B cell (primary cell): ENCODE measurements at regions of chr11 and their contacts with region 1.

Region 1: DNA sequence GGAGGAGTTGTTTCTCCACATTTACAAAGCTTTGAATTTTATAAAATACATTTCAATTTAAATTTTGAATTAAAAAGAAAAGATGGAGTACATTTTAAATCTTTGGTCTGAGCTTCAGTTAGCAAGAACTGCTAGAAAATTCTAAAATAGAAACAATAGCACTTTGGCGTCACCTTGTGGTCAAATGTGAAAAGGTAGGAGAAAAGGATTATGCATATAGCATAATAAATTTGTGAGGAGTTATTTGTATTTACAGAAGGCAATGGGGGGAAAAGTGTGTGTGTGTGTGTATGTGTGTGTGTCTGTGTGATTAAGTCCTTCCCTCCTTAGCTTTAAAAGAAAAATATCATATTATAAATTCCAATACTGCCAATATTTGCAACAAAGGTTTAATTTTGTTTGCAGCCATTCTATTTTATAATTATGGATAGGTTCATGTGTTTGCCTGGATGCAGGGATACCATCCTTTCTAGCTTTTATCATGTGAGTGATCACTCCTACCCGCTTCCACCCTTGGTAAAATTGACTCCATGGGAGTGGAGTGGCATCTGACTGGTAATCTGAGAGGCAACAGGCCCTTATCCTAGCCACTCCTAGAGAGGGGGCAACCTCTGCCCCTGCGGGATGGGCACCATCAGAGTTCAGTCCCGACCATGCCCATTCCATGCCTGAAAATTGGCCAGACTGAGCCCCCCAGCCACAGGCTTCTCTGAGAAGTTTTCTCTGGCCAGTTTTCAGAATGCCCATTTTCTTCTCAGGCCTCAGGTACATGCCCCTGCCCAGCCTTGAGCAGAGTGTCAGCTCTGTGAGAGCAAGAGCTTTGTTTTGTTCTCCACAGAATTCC is 13.6 kb upstream of the LGR4 start:
- DNase-seq: peak; percentile 63
- ATAC-seq: peak; percentile 45
- H3K4me3 ChIP-seq: no peak overlapping the region
- H3K4me3 Mint-ChIP-seq: no peak overlapping the region
- H3K27ac ChIP-seq: no peak overlapping the region
- H3K27ac Mint-ChIP-seq: no peak overlapping the region
- H3K4me1 ChIP-seq: no peaks in the 10 kb centered on the region
- H3K4me1 Mint-ChIP-seq: no peaks in the 10 kb centered on the region
- H3K27me3 ChIP-seq: no peaks in the 10 kb centered on the region
- H3K27me3 Mint-ChIP-seq: no peaks in the 10 kb centered on the region
- CTCF ChIP-seq: peak; percentile 97

Region 2: DNA sequence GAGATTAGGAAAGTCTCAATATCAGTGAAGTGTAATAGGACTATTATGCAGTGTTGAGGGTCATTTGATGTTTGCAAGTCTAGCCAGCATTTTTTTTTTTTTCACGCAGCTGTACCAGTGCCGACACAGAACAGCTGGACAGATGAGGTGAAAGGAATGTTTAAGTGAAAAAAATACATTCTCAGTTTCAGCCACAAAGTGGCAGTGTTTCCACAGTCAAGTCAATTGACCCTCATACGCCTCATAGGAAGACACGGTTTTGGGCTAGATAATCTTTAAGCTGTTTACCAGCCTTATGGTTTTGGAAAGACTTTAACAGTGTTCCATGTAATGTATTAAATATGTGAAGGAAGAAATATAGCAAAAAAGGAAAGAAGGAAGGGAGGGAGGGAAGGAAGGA is 1504.2 kb before region 1 on chr11:
- CTCF ChIA-PET with region 1: no interaction called
- POLR2A ChIA-PET with region 1: no interaction called
- intact Hi-C with region 1: loop called (anchors 2 kb)
- DNase-seq: peak; percentile 73
- ATAC-seq: peak; percentile 75
- H3K4me3 ChIP-seq: peak overlapping the region in 2 of 5 experiments; percentile 1 to 16
- H3K4me3 Mint-ChIP-seq: peak overlapping the region; percentile 81
- H3K27ac ChIP-seq: peak overlapping the region; percentile 42 to 63
- H3K27ac Mint-ChIP-seq: peak overlapping the region; percentile 86
- H3K4me1 ChIP-seq: peaks cover 16 to 17% of the 10 kb centered on the region in 2 donors
- H3K4me1 Mint-ChIP-seq: peaks cover 23% of the 10 kb centered on the region
- H3K27me3 ChIP-seq: no peaks in the 10 kb centered on the region
- H3K27me3 Mint-ChIP-seq: peaks cover 3% of the 10 kb centered on the region
- CTCF ChIP-seq: peak; percentile 75

Region 3: DNA sequence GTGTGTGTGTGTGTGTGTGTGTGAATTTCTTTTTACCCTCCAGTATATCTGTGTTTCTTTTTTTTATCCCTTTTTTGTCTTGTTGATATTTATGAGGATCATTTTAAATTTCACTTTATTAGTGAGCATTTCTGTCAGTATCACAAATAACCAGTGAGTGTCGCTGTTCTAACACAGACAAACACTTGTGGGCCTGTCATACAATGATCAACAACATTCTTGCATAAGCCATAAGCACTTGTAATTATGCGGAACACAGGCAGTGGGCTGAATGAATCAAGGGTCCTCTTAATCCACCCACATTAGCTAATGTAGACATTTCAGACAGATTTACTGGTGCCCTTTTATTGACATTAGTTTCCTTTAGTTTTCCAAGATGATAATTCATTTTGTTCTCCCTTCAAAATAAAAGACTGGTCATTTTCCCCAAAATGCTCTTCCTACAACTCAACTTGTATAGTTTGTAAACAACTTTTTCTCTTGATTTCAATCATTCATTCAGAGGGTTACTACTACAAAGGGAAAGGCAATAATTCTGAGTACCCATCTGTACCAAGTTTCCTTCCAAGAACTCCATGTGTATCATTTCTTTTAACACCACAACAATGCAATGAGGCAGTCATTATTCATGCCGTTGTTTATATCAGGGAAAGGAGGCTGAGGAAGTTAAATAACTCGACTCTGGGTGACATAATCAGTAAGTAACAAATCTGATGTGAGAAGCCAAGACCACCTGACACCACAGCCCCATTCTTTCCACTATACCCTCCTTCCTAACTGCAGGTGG is 1188.8 kb before region 1 on chr11:
- CTCF ChIA-PET with region 1: interaction called, 6 read pairs
- POLR2A ChIA-PET with region 1: no interaction called
- intact Hi-C with region 1: loop called (anchors 5 kb)
- DNase-seq: peak; percentile 20
- ATAC-seq: no peak
- H3K4me3 ChIP-seq: no peak overlapping the region
- H3K4me3 Mint-ChIP-seq: no peak overlapping the region
- H3K27ac ChIP-seq: no peak overlapping the region
- H3K27ac Mint-ChIP-seq: no peak overlapping the region
- H3K4me1 ChIP-seq: no peaks in the 10 kb centered on the region
- H3K4me1 Mint-ChIP-seq: no peaks in the 10 kb centered on the region
- H3K27me3 ChIP-seq: peaks cover 0 to 3% (median 0%) of the 10 kb centered on the region in 4 experiments
- H3K27me3 Mint-ChIP-seq: peaks cover 5% of the 10 kb centered on the region
- CTCF ChIP-seq: peak; percentile 60

Region 4: DNA sequence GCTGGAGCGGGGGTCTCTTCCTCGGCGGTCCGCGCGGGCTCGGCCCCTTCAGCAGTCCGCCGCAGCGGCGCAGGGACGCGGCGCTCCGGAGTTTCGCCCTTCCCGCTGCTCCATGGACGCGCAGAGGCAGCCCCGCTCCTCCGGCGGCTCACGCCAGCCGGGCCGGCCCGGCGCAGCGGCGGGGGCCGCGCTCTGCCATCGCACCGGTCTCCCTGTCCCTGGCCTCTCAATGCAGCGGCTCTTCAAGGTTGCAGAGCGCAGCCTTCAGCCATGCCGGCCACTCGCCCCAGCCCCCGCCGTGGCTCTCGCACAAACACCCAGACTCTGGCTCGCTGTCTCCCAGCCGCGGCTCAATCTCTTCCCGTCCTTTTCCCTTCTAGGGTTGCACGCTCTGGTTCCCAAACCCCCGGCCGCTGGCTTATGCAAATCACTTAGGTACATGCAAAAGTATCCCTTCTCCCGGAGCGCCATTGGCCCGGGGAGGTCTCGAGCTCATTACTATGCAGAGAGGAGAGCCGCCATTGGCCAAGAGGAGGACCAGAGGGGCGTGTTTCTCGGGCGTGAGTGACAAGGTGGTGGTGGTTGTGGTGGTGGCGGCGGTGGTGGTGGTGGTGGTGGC is 13.6 kb before region 1 on chr11 and contains the start of gene LGR4:
- CTCF ChIA-PET with region 1: interaction called, 27 read pairs
- POLR2A ChIA-PET with region 1: no interaction called
- intact Hi-C with region 1: no loop called
- DNase-seq: peak; percentile 80
- ATAC-seq: peak; percentile 88
- H3K4me3 ChIP-seq: peak within 1 kb of the TSS; percentile 52 to 72 (median 66)
- H3K4me3 Mint-ChIP-seq: peak within 1 kb of the TSS; percentile 92
- H3K27ac ChIP-seq: no peak within 1 kb of the TSS
- H3K27ac Mint-ChIP-seq: peak within 1 kb of the TSS; percentile 63
- H3K4me1 ChIP-seq: peaks cover 11% of the 10 kb centered on the region in 2 donors
- H3K4me1 Mint-ChIP-seq: peaks cover 22% of the 10 kb centered on the region
- H3K27me3 ChIP-seq: peaks cover 0 to 8% (median 0%) of the 10 kb centered on the region in 4 experiments
- H3K27me3 Mint-ChIP-seq: peaks cover 4% of the 10 kb centered on the region
- CTCF ChIP-seq: no peak
- total RNA-seq, gene LGR4: 3.3 TPM in 2 replicates

Region 5: GRCh38 chr11:27506200-27507182 is 20.3 kb after region 1 on chr11 and contains the start of gene LIN7C:
- CTCF ChIA-PET with region 1: interaction called, 118 read pairs
- POLR2A ChIA-PET with region 1: no interaction called
- intact Hi-C with region 1: loop called (anchors 1 kb)
- DNase-seq: peak; percentile 98
- ATAC-seq: peak; percentile 91
- H3K4me3 ChIP-seq: peak within 1 kb of the TSS; percentile 81 to 99 (median 98)
- H3K4me3 Mint-ChIP-seq: peak within 1 kb of the TSS; percentile 100
- H3K27ac ChIP-seq: peak within 1 kb of the TSS; percentile 96 to 97
- H3K27ac Mint-ChIP-seq: peak within 1 kb of the TSS; percentile 97
- H3K4me1 ChIP-seq: peaks cover 23 to 25% of the 10 kb centered on the region in 2 donors
- H3K4me1 Mint-ChIP-seq: peaks cover 45% of the 10 kb centered on the region
- H3K27me3 ChIP-seq: no peaks in the 10 kb centered on the region
- H3K27me3 Mint-ChIP-seq: no peaks in the 10 kb centered on the region
- CTCF ChIP-seq: no peak
- total RNA-seq, gene LIN7C: 24.2 TPM in 2 replicates